ENCODE measurements at regions of chr12 and their contacts with region 1.

Region 1: GRCh38 chr12:90940872-90941499 is 14.0 kb downstream of the CCER1 start:
- DNase-seq: peak; percentile 55
- ATAC-seq: peak; percentile 94
- H3K4me3 ChIP-seq: no peak overlapping the region
- H3K27ac ChIP-seq: no peak overlapping the region
- H3K4me1 ChIP-seq: peaks cover 0 to 12% of the 10 kb centered on the region in 2 experiments; a peak in 3 of 4 replicates
- H3K27me3 ChIP-seq: no peaks in the 10 kb centered on the region
- CTCF ChIP-seq: peak; percentile 42 to 72 (median 63); a peak in 5 of 6 replicates
- POLR2A ChIP-seq: no peak
- RAD21 ChIP-seq: peak; percentile 78

Region 2: GRCh38 chr12:89470741-89471509 is 1470.1 kb before region 1 on chr12:
- CTCF ChIA-PET with region 1: no interaction called
- POLR2A ChIA-PET with region 1: no interaction called
- RAD21 ChIA-PET with region 1: no interaction called
- intact Hi-C with region 1: loop called (anchors 10 kb)
- DNase-seq: peak; percentile 42
- ATAC-seq: peak; percentile 83
- H3K4me3 ChIP-seq: no peak overlapping the region
- H3K27ac ChIP-seq: no peak overlapping the region
- H3K4me1 ChIP-seq: no peaks in the 10 kb centered on the region
- H3K27me3 ChIP-seq: no peaks in the 10 kb centered on the region
- CTCF ChIP-seq: peak; percentile 56 to 72 (median 66)
- POLR2A ChIP-seq: no peak
- RAD21 ChIP-seq: peak; percentile 71

Region 3: GRCh38 chr12:89671469-89671868 is 1269.5 kb before region 1 on chr12:
- CTCF ChIA-PET with region 1: no interaction called
- POLR2A ChIA-PET with region 1: no interaction called
- RAD21 ChIA-PET with region 1: no interaction called
- intact Hi-C with region 1: no loop called
- DNase-seq: no peak
- ATAC-seq: no peak
- H3K4me3 ChIP-seq: no peak overlapping the region
- H3K27ac ChIP-seq: no peak overlapping the region
- H3K4me1 ChIP-seq: no peaks in the 10 kb centered on the region
- H3K27me3 ChIP-seq: no peaks in the 10 kb centered on the region
- CTCF ChIP-seq: no peak
- POLR2A ChIP-seq: no peak
- RAD21 ChIP-seq: no peak

Region 4: GRCh38 chr12:90959538-90960139 is 18.7 kb after region 1 on chr12:
- CTCF ChIA-PET with region 1: interaction called, 37 read pairs
- POLR2A ChIA-PET with region 1: interaction called, 4 read pairs
- RAD21 ChIA-PET with region 1: no interaction called
- intact Hi-C with region 1: no loop called
- DNase-seq: peak; percentile 39
- ATAC-seq: peak; percentile 82
- H3K4me3 ChIP-seq: no peak overlapping the region
- H3K27ac ChIP-seq: no peak overlapping the region
- H3K4me1 ChIP-seq: no peaks in the 10 kb centered on the region
- H3K27me3 ChIP-seq: no peaks in the 10 kb centered on the region
- CTCF ChIP-seq: peak; percentile 55 to 68 (median 66); a peak in 5 of 6 replicates
- POLR2A ChIP-seq: no peak
- RAD21 ChIP-seq: peak; percentile 64

Region 5: DNA sequence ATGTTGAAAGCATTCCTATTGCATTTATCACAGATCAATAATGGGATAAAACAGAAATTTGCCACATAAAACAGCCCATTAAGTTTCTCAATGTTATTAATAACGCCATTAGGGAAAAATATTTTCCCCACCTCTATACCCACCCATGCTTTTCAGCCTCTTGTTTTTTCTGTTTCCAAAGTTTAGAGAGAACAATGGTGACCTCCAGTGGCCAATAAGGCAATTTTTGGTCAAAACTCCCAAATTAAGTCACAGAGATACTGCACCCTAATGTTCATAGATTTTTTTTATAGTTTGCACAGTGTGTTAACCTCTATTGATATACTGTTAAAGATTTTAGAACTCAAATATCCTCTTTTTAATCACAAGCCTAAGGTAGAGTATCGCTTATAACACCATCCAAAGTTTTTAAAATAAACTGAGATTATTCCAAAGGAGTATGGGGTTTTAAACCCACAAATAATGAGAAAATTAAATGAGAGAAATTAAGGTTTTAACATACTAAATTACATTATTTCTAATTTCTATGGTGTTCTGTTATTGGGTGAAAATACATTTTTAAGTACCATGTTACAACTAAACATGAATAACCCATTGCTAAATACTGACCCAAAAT is 426.4 kb after region 1 on chr12:
- CTCF ChIA-PET with region 1: interaction called, 3 read pairs
- POLR2A ChIA-PET with region 1: no interaction called
- RAD21 ChIA-PET with region 1: no interaction called
- intact Hi-C with region 1: loop called (anchors 1 kb)
- DNase-seq: peak; percentile 13
- ATAC-seq: peak; percentile 73
- H3K4me3 ChIP-seq: no peak overlapping the region
- H3K27ac ChIP-seq: no peak overlapping the region
- H3K4me1 ChIP-seq: no peaks in the 10 kb centered on the region
- H3K27me3 ChIP-seq: no peaks in the 10 kb centered on the region
- CTCF ChIP-seq: peak; percentile 50 to 71 (median 52); a peak in 5 of 6 replicates
- POLR2A ChIP-seq: no peak
- RAD21 ChIP-seq: peak; percentile 54

Measured in HCT116 (cell line).